HepG2 (cell line): ENCODE measurements at regions of chrX and their contacts with region 1.

Region 1: GRCh38 chrX:31223817-31224216 is 152.0 kb upstream of the FTHL17 start:
- DNase-seq: no peak
- ATAC-seq: no peak
- H3K4me3 ChIP-seq: no peak overlapping the region
- H3K27ac ChIP-seq: no peak overlapping the region
- H3K4me1 ChIP-seq: peaks cover 43% of the 10 kb centered on the region
- H3K27me3 ChIP-seq: no peaks in the 10 kb centered on the region
- CTCF ChIP-seq: no peak
- EP300 ChIP-seq: no peak
- POLR2A ChIP-seq: no peak
- RAD21 ChIP-seq: no peak

Region 2: DNA sequence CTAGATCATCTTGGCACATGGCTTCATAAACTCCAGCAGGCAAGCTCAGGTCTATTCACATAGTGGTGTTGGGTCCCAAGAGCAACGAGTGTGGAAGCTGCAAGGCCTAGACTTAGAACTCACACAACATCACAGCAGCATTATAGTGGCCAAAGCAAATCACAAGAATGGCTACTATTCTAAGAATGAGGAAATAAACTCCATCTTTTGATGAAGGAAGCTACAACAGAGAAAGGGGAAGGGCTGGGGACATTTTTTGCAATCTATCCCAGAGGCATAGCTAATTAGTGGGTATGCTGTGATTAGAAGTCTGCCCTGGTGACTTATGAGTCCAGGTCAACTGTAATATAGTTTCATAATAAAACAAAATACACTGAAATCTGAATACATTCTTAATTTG is 291.9 kb before region 1 on chrX:
- CTCF ChIA-PET with region 1: no interaction called
- POLR2A ChIA-PET with region 1: no interaction called
- in situ Hi-C with region 1: no loop called
- intact Hi-C with region 1: loop called (anchors 5 kb)
- DNase-seq: peak; percentile 3
- ATAC-seq: no peak
- H3K4me3 ChIP-seq: no peak overlapping the region
- H3K27ac ChIP-seq: peak overlapping the region; percentile 73
- H3K4me1 ChIP-seq: peaks cover 63% of the 10 kb centered on the region
- H3K27me3 ChIP-seq: no peaks in the 10 kb centered on the region
- CTCF ChIP-seq: no peak
- EP300 ChIP-seq: no peak
- POLR2A ChIP-seq: no peak
- RAD21 ChIP-seq: no peak

Region 3: GRCh38 chrX:30971774-30972603 is 251.8 kb before region 1 on chrX:
- CTCF ChIA-PET with region 1: no interaction called
- POLR2A ChIA-PET with region 1: no interaction called
- in situ Hi-C with region 1: no loop called
- intact Hi-C with region 1: loop called (anchors 10 kb)
- DNase-seq: peak; percentile 53
- ATAC-seq: peak; percentile 93
- H3K4me3 ChIP-seq: peak overlapping the region in 1 of 3 experiments; percentile 31; a peak in 3 of 6 replicates
- H3K27ac ChIP-seq: no peak overlapping the region
- H3K4me1 ChIP-seq: peaks cover 46% of the 10 kb centered on the region
- H3K27me3 ChIP-seq: no peaks in the 10 kb centered on the region
- CTCF ChIP-seq: peak; percentile 78
- EP300 ChIP-seq: no peak
- POLR2A ChIP-seq: no peak
- RAD21 ChIP-seq: peak; percentile 57

Region 4: DNA sequence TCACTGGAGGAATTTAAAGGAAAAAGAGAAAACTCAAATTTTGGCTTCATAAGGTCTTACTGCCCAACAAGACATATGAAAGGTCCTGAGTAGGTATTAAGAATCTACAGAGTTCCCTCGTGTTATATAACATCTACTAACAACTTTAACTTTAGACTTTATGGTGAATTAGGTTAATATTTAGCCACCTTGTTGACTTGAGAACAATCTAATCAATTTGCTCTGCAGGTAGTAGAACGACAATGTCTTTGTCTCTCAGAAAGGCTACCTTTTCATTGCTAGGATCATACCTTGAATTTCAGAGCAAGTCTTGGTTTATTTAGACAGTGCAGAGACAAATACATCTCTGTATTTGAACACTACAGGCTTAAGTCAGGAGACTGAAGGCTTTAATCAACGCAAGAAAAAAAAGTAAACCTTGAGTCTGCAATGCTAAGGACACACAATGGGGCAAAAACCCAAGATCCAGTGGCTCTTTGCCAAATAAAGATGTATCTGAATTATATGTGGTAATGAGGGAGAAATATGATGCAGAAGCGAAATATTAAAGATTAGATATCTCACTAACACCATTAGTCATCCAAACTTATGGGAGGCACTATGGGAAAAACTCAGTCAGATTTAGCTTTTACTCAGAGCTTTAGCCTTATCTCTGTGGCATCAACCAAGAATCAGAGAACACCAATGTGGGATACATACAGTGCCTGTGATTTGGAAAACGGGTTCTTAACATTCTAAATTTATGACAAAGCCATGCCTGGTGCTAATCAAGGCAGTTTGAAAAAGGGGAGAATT is 58.4 kb before region 1 on chrX:
- CTCF ChIA-PET with region 1: no interaction called
- POLR2A ChIA-PET with region 1: no interaction called
- in situ Hi-C with region 1: no loop called
- intact Hi-C with region 1: no loop called
- DNase-seq: peak; percentile 0
- ATAC-seq: no peak
- H3K4me3 ChIP-seq: no peak overlapping the region
- H3K27ac ChIP-seq: no peak overlapping the region
- H3K4me1 ChIP-seq: peaks cover 22% of the 10 kb centered on the region
- H3K27me3 ChIP-seq: no peaks in the 10 kb centered on the region
- CTCF ChIP-seq: no peak
- EP300 ChIP-seq: no peak
- POLR2A ChIP-seq: no peak
- RAD21 ChIP-seq: no peak

Region 5: GRCh38 chrX:31265383-31265782 is 41.6 kb after region 1 on chrX:
- CTCF ChIA-PET with region 1: no interaction called
- POLR2A ChIA-PET with region 1: interaction called, 4 read pairs
- in situ Hi-C with region 1: no loop called
- intact Hi-C with region 1: loop called (anchors 1 kb)
- DNase-seq: peak; percentile 82
- ATAC-seq: peak; percentile 68
- H3K4me3 ChIP-seq: peak overlapping the region; percentile 52 to 77 (median 52); a peak in 4 of 6 replicates
- H3K27ac ChIP-seq: peak overlapping the region; percentile 81
- H3K4me1 ChIP-seq: peaks cover 37% of the 10 kb centered on the region
- H3K27me3 ChIP-seq: no peaks in the 10 kb centered on the region
- CTCF ChIP-seq: no peak
- EP300 ChIP-seq: peak in 1 of 2 experiments; percentile 72; a peak in 2 of 4 replicates
- POLR2A ChIP-seq: 0 out of 4 replicates have a peak, but pooled peaks of 1 of the 2 experiments have one; percentile 36
- RAD21 ChIP-seq: no peak

Region 6: DNA sequence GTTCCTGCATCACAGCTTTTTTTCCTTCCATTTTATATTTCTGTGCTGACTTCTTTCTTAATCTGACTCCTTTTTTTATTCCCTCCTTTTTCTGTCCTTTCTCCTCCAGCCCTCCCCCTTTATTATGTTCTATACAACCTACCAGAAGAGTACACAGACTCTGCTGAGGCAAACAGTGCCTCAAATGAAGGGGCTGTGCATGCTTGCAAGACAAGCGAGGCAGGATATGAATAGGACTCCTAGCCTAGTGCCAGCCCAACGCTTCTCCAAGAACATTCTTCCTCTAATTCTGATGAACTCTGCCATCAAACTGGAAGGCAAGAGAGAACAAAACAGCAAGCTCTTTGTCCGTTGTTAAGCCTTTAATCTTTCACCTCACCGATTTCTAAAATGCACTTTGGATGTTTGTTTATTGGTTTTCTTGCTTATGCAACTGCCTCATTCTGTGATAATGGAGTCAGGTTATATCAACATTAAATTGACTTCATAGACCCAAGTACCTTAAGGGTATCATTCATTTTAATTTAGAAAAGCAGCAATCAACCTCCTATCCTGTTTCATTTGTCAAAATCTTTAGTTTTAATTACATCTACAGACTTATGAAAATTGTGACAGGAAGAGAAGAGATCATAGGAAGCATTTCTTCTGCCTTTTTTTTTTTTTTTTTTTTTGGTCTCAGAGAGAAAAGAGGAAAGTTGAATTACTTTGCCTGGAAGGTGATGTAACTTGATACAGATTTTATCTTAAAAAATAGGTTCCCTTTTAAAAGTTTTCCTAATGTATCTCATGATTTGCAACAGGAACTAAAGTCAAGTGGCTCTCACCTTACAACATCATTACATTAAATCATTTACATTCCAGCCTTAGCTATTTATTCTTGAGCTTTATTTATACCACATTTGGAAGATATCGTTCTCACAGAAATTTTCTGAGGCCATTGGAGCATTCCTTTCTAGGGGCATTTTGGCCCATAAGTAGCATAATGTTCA is 132.8 kb after region 1 on chrX:
- CTCF ChIA-PET with region 1: no interaction called
- POLR2A ChIA-PET with region 1: no interaction called
- in situ Hi-C with region 1: no loop called
- intact Hi-C with region 1: loop called (anchors 5 kb)
- DNase-seq: peak; percentile 75
- ATAC-seq: peak; percentile 96
- H3K4me3 ChIP-seq: no peak overlapping the region
- H3K27ac ChIP-seq: peak overlapping the region; percentile 74
- H3K4me1 ChIP-seq: peaks cover 41% of the 10 kb centered on the region
- H3K27me3 ChIP-seq: no peaks in the 10 kb centered on the region
- CTCF ChIP-seq: no peak
- EP300 ChIP-seq: peak; percentile 33 to 83; a peak in 2 of 4 replicates
- POLR2A ChIP-seq: no peak
- RAD21 ChIP-seq: no peak

Region 7: GRCh38 chrX:31371956-31372355 is 148.1 kb after region 1 on chrX:
- CTCF ChIA-PET with region 1: no interaction called
- POLR2A ChIA-PET with region 1: no interaction called
- in situ Hi-C with region 1: no loop called
- intact Hi-C with region 1: no loop called
- DNase-seq: no peak
- ATAC-seq: no peak
- H3K4me3 ChIP-seq: no peak overlapping the region
- H3K27ac ChIP-seq: no peak overlapping the region
- H3K4me1 ChIP-seq: no peaks in the 10 kb centered on the region
- H3K27me3 ChIP-seq: no peaks in the 10 kb centered on the region
- CTCF ChIP-seq: no peak
- EP300 ChIP-seq: no peak
- POLR2A ChIP-seq: no peak
- RAD21 ChIP-seq: no peak